ENCODE measurements at regions of chr15 and their contacts with region 1.

Region 1: DNA sequence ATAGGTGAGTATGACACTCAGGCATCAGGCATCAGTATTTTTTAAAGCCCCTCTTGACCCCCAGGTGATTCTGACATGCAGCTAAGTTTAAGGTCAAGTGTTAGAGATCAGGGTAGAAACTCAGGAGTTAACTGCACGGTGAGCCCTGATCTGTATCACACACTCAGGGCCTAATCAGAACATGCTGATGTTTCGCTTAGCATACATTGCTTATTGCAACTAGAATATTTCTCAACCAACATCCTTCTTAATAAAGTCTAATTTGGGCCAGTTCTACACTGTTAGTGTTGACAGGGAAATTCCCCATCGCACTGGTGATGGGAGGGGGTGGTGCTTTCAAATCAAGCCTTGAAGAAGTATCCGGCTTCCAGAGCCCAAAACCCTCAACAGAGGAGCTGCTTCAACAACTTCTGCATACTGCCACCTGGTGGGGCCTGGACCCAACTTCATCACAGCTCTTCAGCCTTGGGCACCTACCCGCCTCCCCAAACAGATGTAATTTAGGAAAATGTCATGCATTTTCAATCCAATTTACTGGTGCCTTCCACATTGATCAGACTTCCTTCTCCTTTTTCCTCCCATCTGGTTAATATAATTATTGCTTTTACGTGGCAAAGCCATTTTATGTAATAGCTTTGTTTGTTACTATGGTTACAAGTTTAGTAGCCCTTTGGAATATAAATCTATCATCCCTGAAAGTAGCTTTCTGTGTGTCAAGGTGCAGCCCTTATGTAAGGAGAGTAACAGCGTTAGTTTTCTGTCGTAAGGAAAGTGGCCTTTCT is 312.2 kb downstream of the RORA start:
- H3K4me3 ChIP-seq: no peak overlapping the region
- H3K27ac ChIP-seq: no peak overlapping the region
- H3K4me1 ChIP-seq: 0 out of 2 replicates have a peak, but pooled peaks cover 2% of the 10 kb centered on the region
- CTCF ChIP-seq: no peak

Region 2: DNA sequence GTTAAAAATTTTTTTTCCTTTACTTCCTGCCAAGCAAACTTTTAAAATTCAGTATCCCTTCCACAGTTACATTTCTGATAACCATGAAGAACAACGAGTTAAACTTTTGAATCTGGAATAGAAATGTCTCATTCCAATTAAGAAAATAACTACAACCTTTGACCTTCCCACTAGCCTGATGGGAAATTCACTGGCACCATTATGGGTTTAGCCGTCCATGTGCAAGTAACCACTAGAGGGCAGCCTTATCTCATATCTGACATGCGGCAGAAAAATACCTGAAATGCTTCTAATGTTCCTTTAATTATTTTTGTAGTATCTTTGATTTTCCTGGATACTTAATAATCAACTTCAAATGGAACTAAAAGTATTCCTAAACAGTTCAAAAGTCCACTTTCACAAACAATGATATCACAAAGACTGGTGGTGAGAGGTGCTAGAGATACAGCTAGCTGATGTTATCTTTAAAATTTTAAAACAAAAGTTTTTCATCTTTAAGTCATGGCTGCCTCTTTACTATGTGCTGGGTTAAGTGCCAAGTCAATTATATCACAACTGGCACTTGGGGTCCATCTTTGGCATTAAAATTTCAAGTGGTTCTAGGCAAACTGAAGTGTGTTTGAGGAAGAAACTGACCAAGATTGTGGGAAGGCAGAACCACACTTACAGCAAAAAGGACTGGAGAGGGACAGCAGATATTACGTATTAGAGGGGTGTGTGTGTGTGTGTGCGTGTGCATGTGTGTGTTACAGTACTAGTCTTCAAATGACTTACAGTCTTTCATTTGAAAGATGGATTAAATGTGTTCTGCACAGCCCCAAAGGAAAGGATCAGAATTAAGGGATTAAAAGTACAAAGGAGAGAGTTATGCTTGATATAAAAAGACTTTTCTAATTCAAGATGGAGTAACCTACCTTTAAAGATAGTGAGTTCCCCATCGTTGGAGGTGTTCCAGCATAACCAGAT is 330.8 kb before region 1 on chr15:
- CTCF ChIA-PET with region 1: interaction called, 32 read pairs
- POLR2A ChIA-PET with region 1: no interaction called
- H3K4me3 ChIP-seq: no peak overlapping the region
- H3K27ac ChIP-seq: no peak overlapping the region
- H3K4me1 ChIP-seq: peaks cover 23% of the 10 kb centered on the region
- CTCF ChIP-seq: no peak

Region 3: DNA sequence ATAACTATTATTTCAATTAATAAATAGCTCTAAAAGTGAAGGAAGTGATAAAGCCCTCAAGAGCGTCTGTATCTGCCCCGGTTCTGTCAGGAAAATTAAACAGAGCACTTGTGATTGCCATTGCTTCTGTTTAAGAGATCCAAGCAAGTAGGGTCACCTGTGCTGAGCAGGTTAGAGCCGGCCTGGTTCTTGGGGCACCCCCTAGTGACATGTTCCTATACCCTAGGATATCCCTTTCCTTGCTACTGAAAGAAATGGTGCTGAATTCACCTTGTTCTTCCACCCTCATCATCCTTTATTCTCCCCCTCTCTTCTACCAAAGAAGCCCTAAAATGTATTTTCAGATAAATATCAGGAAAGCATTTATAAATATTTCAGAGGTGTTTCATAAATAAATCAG is 11.3 kb before region 1 on chr15:
- CTCF ChIA-PET with region 1: interaction called, 14 read pairs
- POLR2A ChIA-PET with region 1: no interaction called
- H3K4me3 ChIP-seq: no peak overlapping the region
- H3K27ac ChIP-seq: no peak overlapping the region
- H3K4me1 ChIP-seq: no peaks in the 10 kb centered on the region
- CTCF ChIP-seq: no peak

Region 4: GRCh38 chr15:60928970-60929369 is 12.1 kb after region 1 on chr15:
- CTCF ChIA-PET with region 1: interaction called, 18 read pairs
- POLR2A ChIA-PET with region 1: no interaction called
- H3K4me3 ChIP-seq: no peak overlapping the region
- H3K27ac ChIP-seq: no peak overlapping the region
- H3K4me1 ChIP-seq: no peaks in the 10 kb centered on the region
- CTCF ChIP-seq: no peak

Region 5: GRCh38 chr15:60972301-60972700 is 55.4 kb after region 1 on chr15:
- CTCF ChIA-PET with region 1: no interaction called
- POLR2A ChIA-PET with region 1: no interaction called
- H3K4me3 ChIP-seq: no peak overlapping the region
- H3K27ac ChIP-seq: no peak overlapping the region
- H3K4me1 ChIP-seq: no peaks in the 10 kb centered on the region
- CTCF ChIP-seq: no peak

Region 6: GRCh38 chr15:61834076-61834697 is 917.3 kb after region 1 on chr15:
- CTCF ChIA-PET with region 1: interaction called, 12 read pairs
- POLR2A ChIA-PET with region 1: no interaction called
- H3K4me3 ChIP-seq: no peak overlapping the region
- H3K27ac ChIP-seq: no peak overlapping the region
- H3K4me1 ChIP-seq: no peaks in the 10 kb centered on the region
- CTCF ChIP-seq: peak; percentile 21; the same call in 1 of the 2 replicates

Measured in HEK293 (cell line).